Psoas muscle (tissue), 8 donors: ENCODE measurements at regions of chr5 and their contacts with region 1.

Region 1: GRCh38 chr5:179697993-179698934 is 503 bp upstream of the CANX start:
- DNase-seq: peak; percentile 99 to 100
- ATAC-seq: peak; percentile 92 to 97 (median 96)
- H3K4me3 ChIP-seq: peak overlapping the region; percentile 100
- H3K27ac ChIP-seq: peak overlapping the region; percentile 100
- H3K4me1 ChIP-seq: peaks cover 16% of the 10 kb centered on the region
- H3K27me3 ChIP-seq: no peaks in the 10 kb centered on the region
- CTCF ChIP-seq: peak; percentile 12

Region 2: DNA sequence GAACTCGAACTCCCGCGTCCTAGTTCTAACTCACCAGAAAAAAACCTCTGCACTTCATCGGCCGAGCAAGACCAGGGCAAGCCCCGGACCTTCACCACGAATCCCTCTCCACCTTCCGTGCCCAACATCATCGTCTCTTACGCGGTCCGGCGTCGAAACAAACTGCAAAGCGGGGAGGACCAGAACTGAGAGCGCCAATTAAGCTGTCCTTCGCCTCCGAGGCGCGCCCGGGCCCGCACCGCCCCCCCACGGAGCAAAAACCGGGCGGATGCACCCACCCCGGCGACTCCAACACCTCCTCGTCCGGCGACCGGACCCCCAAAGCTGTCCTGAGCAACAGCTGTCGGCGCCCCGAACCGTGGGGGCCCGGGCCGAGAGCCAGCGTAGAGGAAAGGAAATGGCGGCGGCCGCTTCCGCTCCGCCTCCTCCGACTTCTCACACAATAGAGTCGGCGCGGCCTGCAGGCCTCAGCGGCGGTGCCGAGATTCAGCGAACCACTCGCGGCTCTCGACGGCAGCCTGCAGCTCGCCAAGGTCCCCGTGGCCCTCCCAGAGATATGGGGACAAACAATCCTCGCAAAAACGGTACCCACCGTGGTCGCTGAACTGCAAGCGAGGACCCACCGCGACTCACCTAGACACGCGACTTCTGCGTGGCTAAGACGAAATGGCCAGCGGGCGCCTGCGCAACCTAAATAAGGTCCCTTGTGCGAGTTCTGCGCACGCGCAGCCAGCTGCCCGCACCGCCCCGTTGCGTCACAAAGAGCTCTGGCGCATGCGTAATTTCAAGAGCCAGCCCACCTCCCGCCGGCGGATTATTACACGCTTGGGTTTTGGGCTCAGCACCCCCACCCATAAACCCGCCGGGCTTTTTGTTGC is 75.0 kb before region 1 on chr5 and contains the start of gene HNRNPH1:
- intact Hi-C with region 1: loop called in 1 of 2 experiments (anchors 5 kb)
- DNase-seq: peak; percentile 97 to 99
- ATAC-seq: peak; percentile 88 to 89 (median 88)
- H3K4me3 ChIP-seq: peak within 1 kb of the TSS; percentile 79
- H3K27ac ChIP-seq: peak within 1 kb of the TSS; percentile 93
- H3K4me1 ChIP-seq: peaks cover 46% of the 10 kb centered on the region
- H3K27me3 ChIP-seq: no peaks in the 10 kb centered on the region
- CTCF ChIP-seq: peak; percentile 12
- total RNA-seq, gene HNRNPH1: 141 to 195 (median 179) TPM

Region 3: GRCh38 chr5:179678223-179679013 is 19.8 kb before region 1 on chr5:
- intact Hi-C with region 1: loop called in 1 of 2 experiments (anchors 2 kb)
- DNase-seq: peak; percentile 97 to 98
- ATAC-seq: peak; percentile 97 to 99 (median 98)
- H3K4me3 ChIP-seq: peak overlapping the region; percentile 82
- H3K27ac ChIP-seq: peak overlapping the region; percentile 84
- H3K4me1 ChIP-seq: peaks cover 8% of the 10 kb centered on the region
- H3K27me3 ChIP-seq: no peaks in the 10 kb centered on the region
- CTCF ChIP-seq: no peak

Region 4: GRCh38 chr5:179732417-179732917 is 34.2 kb after region 1 on chr5 and contains the start of gene MAML1:
- intact Hi-C with region 1: loop called (anchors 2 to 5 kb)
- DNase-seq: peak; percentile 100
- ATAC-seq: peak; percentile 97 to 99 (median 98)
- H3K4me3 ChIP-seq: peak within 1 kb of the TSS; percentile 73
- H3K27ac ChIP-seq: peak within 1 kb of the TSS; percentile 94
- H3K4me1 ChIP-seq: peaks cover 43% of the 10 kb centered on the region
- H3K27me3 ChIP-seq: no peaks in the 10 kb centered on the region
- CTCF ChIP-seq: no peak
- total RNA-seq, gene MAML1: 11.2 to 16.0 (median 12.3) TPM